ENCODE measurements at regions of chr6 and their contacts with region 1.

Region 1: GRCh38 chr6:82205930-82206392 is 41.6 kb downstream of the IBTK start:
- ATAC-seq: peak in 1 of 8 experiments; percentile 39
- H3K4me3 ChIP-seq: no peak overlapping the region
- H3K27ac ChIP-seq: no peak overlapping the region
- H3K4me1 ChIP-seq: no peaks in the 10 kb centered on the region

Region 2: DNA sequence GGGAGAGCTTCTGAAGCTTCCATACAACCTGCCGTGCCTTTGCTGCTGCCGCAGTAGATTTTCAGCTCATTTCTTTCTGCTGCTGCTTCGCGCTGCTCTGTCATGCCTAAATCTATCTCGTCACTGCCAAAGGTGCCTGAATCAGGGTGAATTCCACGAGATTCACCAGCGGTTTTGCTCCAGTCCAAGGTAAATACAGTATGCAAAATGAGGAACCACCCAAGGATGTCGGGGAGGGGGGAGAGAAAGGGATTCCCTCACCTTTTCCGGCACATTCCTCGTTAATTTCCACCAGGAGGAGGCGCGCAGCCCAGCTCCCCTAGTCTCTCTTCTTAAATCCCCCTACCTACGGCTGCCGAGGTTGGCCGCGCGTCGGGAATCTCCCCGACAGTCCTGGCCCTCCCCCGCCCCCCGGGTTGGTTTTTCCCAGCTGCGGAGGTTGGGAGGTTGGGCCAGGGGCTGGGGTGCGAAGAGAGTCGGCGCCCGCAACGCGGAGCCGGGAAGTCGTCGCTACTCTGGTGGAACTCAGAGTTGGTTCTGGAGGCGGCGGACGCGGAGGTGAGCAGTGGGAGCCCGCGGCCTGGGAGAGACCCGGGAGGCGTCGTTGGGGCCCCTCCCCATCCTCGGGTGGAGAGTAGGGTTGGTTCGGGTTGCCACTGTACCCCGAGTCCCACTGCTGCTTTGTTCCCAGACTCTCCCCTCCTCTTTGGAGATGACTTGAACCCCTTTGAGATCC is 157.6 kb after region 1 on chr6 and contains the start of gene TPBG:
- in situ Hi-C with region 1: no loop called
- ATAC-seq: peak; percentile 60 to 77 (median 72)
- H3K4me3 ChIP-seq: peak within 1 kb of the TSS; percentile 37 to 56 (median 48)
- H3K27ac ChIP-seq: no peak within 1 kb of the TSS
- H3K4me1 ChIP-seq: peaks cover 0 to 7% of the 10 kb centered on the region in 2 donors
- total RNA-seq, gene TPBG: 4.2 to 44.7 (median 11.1) TPM

Region 3: GRCh38 chr6:83153883-83154521 is 948.0 kb after region 1 on chr6:
- in situ Hi-C with region 1: loop called in 1 of 9 experiments (anchors 25 kb)
- ATAC-seq: peak in 5 of 8 experiments; percentile 55 to 80 (median 72)
- H3K4me3 ChIP-seq: no peak overlapping the region
- H3K27ac ChIP-seq: peak overlapping the region in 1 of 2 donors; percentile 56
- H3K4me1 ChIP-seq: peaks cover 8 to 22% of the 10 kb centered on the region in 2 donors